Mammary epithelial cell (primary cell): ENCODE measurements at regions of chr3 and their contacts with region 1.

Region 1: GRCh38 chr3:194472290-194472920 is 14.4 kb downstream of the ATP13A3 start:
- DNase-seq: peak; percentile 53
- H3K4me3 ChIP-seq: no peak overlapping the region
- H3K27ac ChIP-seq: no peak overlapping the region
- H3K4me1 ChIP-seq: peaks cover 6% of the 10 kb centered on the region
- H3K27me3 ChIP-seq: no peaks in the 10 kb centered on the region
- CTCF ChIP-seq: peak; percentile 100

Region 2: GRCh38 chr3:193826159-193826795 is 646.1 kb before region 1 on chr3:
- CTCF ChIA-PET with region 1: no interaction called
- dilution Hi-C with region 1: no loop called
- in situ Hi-C with region 1: no loop called
- intact Hi-C with region 1: no loop called
- DNase-seq: peak; percentile 95
- H3K4me3 ChIP-seq: no peak overlapping the region
- H3K27ac ChIP-seq: peak overlapping the region; percentile 18
- H3K4me1 ChIP-seq: peaks cover 32% of the 10 kb centered on the region
- H3K27me3 ChIP-seq: no peaks in the 10 kb centered on the region
- CTCF ChIP-seq: no peak

Region 3: GRCh38 chr3:194521514-194522260 is 49.3 kb after region 1 on chr3:
- CTCF ChIA-PET with region 1: no interaction called
- dilution Hi-C with region 1: loop called (anchors 5 kb)
- in situ Hi-C with region 1: no loop called
- intact Hi-C with region 1: no loop called
- DNase-seq: peak; percentile 69
- H3K4me3 ChIP-seq: no peak overlapping the region
- H3K27ac ChIP-seq: peak overlapping the region; percentile 13
- H3K4me1 ChIP-seq: peaks cover 24% of the 10 kb centered on the region
- H3K27me3 ChIP-seq: no peaks in the 10 kb centered on the region
- CTCF ChIP-seq: no peak

Region 4: GRCh38 chr3:194556086-194557056 is 84.0 kb after region 1 on chr3:
- CTCF ChIA-PET with region 1: no interaction called
- dilution Hi-C with region 1: loop called (anchors 5 kb)
- in situ Hi-C with region 1: no loop called
- intact Hi-C with region 1: no loop called
- DNase-seq: peak; percentile 36
- H3K4me3 ChIP-seq: peak overlapping the region in 1 of 3 experiments; percentile 1
- H3K27ac ChIP-seq: no peak overlapping the region
- H3K4me1 ChIP-seq: peaks cover 8% of the 10 kb centered on the region
- H3K27me3 ChIP-seq: no peaks in the 10 kb centered on the region
- CTCF ChIP-seq: no peak

Region 5: DNA sequence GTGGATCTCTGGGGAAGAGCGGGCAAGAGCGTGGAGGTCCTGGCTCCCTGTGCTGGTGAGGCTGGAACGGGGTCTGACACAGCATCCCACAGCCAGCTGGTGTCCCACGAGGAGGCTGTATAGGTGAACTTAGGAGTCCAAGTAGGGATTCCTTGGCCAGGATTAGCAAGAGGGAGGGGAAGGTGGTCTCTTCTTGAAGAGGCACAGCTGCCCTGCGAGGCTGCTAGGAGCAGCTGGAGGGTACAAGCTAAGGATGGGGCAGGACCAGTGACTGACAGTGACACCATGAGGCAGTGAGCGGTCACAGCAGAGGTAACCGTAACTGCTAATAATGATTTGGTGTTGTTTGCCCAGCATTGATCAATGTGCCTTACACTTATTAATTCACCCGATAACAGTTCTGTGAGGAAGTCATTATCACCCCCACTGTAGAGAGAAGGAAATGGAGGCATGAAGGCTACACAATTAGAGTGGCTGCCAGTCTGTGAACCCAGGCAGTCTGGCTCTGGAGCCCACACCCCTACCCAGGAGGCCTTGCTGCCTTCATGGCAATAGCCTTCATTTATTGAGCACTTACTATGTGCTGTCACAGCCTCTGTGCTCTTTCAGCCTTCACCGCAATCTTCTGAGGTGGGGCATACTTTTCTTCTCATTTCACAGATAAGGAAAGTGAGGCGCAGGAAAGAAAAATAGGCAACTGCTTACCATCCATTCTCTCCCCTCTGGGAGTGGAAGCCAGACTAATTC is 101.5 kb after region 1 on chr3:
- CTCF ChIA-PET with region 1: interaction called, 11 read pairs
- dilution Hi-C with region 1: no loop called
- in situ Hi-C with region 1: no loop called
- intact Hi-C with region 1: loop called (anchors 1 kb)
- DNase-seq: no peak
- H3K4me3 ChIP-seq: no peak overlapping the region
- H3K27ac ChIP-seq: no peak overlapping the region
- H3K4me1 ChIP-seq: peaks cover 29% of the 10 kb centered on the region
- H3K27me3 ChIP-seq: no peaks in the 10 kb centered on the region
- CTCF ChIP-seq: peak; percentile 44 to 54

Region 6: DNA sequence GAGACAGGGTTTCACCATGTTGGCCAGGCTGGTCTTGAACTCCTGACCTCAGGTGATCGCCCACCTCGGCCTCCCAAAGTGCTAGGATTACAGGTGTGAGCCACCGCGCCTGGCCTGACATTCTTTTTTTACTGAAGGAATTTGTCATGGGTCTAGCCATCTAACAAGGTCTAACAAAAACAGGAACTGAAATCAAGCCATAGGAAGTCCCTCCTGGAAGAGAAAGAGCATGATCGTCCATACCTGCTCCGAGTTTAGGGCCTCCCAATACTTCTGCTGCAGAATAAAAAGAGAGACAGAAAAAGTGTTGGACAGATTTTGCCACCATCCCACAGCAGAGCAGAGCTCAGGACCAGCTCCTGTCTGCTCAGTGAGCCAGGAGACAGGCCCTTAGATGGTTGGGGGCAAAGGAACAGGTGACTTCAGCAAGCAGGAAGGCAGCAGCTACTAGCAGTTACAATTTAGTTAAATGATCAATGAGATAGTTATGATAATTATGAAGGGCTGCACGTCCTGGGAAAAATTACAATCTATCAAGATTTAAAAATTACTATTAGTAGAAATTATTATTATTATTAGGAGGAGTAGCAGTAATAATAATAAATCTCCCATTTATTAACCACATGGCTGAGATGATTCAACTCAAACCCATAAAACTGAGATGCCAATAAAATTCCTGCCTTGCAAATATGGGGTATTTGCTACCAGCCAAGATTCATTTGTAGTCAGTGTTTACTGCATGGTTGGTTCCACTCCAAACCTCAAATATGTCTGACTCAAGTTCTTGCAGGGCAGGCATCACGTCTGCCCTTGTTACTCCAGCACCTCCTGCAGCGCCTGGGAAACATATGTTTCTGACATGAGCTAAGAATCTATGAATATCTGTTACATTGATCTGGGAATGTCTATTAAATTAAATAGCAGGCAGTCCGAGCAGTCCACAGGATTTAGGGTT is 120.7 kb after region 1 on chr3:
- CTCF ChIA-PET with region 1: interaction called, 10 read pairs
- dilution Hi-C with region 1: no loop called
- in situ Hi-C with region 1: no loop called
- intact Hi-C with region 1: loop called (anchors 1 kb)
- DNase-seq: peak; percentile 96
- H3K4me3 ChIP-seq: no peak overlapping the region
- H3K27ac ChIP-seq: no peak overlapping the region
- H3K4me1 ChIP-seq: peaks cover 13% of the 10 kb centered on the region
- H3K27me3 ChIP-seq: no peaks in the 10 kb centered on the region
- CTCF ChIP-seq: peak; percentile 18 to 47